AG04449 (cell line): ENCODE measurements at regions of chr10 and their contacts with region 1.

Region 1: DNA sequence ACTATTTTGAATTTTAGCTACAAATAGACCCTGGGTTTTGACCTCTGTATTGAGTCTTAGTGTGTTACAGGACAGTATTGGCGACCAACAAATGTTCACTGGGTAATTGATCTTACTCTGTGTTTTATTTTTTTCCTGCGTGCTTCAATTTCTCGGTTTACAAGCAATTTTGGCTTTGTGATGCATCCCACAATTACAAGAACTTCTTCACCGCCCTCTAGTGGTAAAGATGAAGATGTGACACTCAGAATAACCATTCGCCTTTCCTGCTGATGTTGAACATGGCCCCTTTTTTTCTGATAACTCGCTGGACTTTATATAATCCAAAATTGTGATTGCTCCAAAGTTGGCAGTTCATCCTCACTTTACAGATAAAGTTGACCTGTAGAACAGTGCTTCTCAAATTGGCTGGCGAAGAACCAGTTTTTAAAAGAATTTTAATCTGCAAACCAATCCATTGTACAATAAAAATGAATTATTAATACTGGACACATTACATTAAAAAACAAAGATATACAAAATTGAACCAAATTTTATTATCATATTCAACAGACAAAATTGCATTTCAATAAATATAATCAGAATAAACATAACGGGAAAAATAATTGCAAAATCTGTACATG is 20.2 kb upstream of the SMC3 start:
- DNase-seq: no peak
- H3K4me3 ChIP-seq: no peak overlapping the region
- CTCF ChIP-seq: peak; percentile 53

Region 2: DNA sequence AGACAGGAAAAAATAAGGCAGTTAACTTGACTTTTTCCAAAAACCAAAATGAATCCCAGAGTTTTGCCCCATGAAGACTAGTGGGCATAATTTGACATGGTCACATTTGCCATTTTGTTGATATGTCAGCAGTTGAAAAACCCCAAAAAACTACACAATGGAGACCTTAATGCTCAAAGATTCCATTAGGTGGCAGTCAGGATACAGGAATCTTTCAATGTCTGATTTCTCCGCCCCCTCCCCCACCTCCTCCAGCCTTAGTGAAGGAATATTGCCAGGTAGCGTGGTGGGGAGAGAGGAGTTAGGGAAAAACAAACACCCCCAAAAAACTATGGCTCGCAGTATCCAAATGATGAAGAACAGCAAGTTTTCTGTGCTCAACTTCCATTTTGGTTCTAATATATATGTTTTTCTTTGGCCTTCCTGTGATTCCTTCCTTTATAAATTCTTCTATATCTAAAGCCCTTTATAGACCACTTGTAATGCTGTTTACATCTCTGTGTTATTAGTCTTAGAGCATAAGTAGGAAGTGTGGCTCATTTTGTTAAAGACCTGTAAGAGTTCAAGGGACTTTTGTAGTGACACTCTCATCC is 235.8 kb before region 1 on chr10:
- CTCF ChIA-PET with region 1: interaction called, 144 read pairs
- POLR2A ChIA-PET with region 1: no interaction called
- DNase-seq: no peak
- H3K4me3 ChIP-seq: no peak overlapping the region
- CTCF ChIP-seq: peak; percentile 61

Region 3: DNA sequence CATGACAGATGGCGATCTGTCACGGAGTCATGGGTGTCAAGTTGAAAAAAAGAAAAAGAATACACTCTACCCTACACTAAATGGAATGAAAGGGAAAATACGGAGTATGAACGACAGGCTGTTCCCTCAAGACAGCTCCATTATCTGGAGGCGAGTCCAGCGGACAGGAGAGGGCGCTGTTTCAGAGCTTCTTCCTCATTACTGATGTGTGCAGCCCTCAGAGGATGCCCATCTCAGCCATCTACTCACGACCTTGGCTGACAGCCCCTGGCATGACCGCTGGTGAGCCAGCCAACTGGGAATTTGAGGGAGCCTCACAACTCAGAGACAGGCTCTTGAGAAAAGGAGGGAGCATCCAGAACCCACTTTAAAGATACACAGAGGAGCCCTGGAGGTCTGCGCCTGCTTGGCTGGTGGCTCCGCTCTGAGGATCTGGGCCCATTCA is 192.9 kb before region 1 on chr10:
- CTCF ChIA-PET with region 1: interaction called, 63 read pairs
- POLR2A ChIA-PET with region 1: no interaction called
- DNase-seq: peak; percentile 51
- H3K4me3 ChIP-seq: no peak overlapping the region
- CTCF ChIP-seq: peak; percentile 87

Region 4: DNA sequence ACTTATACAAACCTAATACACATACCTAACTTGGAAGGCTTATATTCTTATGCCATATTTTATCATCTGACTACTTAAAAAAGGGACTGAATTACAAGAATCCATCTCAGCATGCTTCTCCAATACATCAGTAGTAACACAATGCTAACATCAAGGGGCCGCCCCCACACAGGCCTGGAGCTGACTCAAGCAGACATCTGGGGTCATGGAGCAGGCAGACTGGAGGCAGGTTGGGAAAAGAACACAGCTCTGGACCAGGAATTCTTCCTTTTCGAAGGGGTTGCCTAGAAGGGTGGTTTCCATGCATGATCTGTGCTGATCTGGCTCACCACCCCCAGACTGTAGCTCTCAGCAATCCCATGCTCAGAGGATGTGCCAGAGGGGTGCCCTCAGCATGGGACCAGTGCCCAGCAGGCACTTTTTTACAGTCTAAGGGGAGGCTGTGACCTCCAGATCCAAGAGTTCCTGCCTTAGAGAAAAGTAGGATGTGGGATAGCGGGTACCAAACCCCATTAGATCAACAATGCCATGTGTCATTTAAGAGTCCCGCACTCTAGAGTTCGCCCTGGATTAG is 75.6 kb before region 1 on chr10:
- CTCF ChIA-PET with region 1: no interaction called
- POLR2A ChIA-PET with region 1: no interaction called
- DNase-seq: no peak
- H3K4me3 ChIP-seq: no peak overlapping the region
- CTCF ChIP-seq: no peak

Region 5: DNA sequence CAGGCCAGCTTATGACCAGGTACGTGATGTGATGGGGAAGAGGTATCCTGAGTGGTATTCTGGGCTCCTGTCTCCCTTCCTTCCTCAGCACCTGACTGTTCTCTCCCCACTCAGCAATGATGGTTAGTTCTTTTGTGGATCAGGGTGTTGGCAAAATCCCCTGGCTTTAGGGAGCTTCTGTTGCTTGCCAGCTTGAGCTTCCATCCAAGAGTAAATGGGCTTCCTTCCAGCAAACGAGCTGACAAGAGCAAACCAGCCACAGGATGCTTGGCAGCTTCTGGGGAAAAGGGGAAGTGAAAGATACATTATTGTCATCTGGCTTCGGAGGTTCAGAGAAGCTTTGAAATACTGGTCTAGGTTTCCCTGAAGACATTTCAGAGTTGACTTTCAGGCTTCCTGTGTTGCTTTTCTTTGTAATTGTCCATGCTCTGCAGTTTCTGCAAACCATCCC is 44.4 kb before region 1 on chr10:
- CTCF ChIA-PET with region 1: interaction called, 11 read pairs
- POLR2A ChIA-PET with region 1: no interaction called
- DNase-seq: no peak
- H3K4me3 ChIP-seq: no peak overlapping the region; the same call in 1 of the 2 replicates
- CTCF ChIP-seq: no peak

Region 6: GRCh38 chr10:110535958-110536891 is 11.0 kb before region 1 on chr10:
- CTCF ChIA-PET with region 1: interaction called, 71 read pairs
- POLR2A ChIA-PET with region 1: no interaction called
- DNase-seq: no peak
- H3K4me3 ChIP-seq: peak overlapping the region; percentile 12; the same call in 1 of the 2 replicates
- CTCF ChIP-seq: peak; percentile 34